ENCODE measurements at regions of chr14 and their contacts with region 1.

Region 1: GRCh38 chr14:67619446-67620216 is at the start of gene ARG2:
- DNase-seq: peak; percentile 98 to 99 (median 98)
- ATAC-seq: peak; percentile 99
- H3K4me3 ChIP-seq: peak within 1 kb of the TSS; percentile 34
- H3K27ac ChIP-seq: no peak within 1 kb of the TSS
- H3K4me1 ChIP-seq: no peaks in the 10 kb centered on the region
- H3K27me3 ChIP-seq: no peaks in the 10 kb centered on the region
- total RNA-seq, gene ARG2: 0.25 to 0.68 (median 0.51) TPM

Region 2: DNA sequence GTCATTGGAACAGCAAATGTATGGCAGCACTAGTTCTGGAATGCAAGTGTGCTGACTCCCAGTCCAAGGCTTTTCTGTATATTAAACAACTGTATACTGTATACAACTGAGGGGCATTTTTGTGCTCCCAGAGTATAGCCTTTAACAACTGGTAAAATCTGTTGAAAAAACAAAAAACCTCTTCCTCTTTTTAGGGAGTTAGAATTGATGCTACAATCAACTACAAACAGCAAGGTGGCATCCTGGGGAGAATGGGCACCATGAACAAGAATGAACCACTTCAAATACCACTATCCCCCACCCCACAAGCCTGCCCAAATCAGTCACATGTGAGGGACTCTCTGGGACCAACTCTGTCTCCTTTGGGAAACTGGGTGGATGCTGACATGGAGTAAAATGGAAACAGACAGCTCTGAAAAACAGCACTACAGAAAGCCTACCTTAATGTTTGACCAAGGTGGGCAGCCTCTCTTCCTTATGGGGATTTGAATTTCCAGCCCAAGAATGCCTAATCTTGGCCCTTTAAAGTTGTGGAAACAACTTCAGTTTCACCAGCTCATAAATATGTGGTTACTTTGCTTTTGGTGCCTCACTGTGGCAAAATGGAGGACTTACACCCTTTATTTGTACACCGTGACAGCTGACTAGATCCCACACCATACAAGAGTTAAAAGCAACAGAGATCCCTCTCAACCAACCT is 47.3 kb after region 1 on chr14:
- intact Hi-C with region 1: loop called in 2 of 4 experiments (anchors 2 to 5 kb)
- DNase-seq: no peak
- ATAC-seq: peak; percentile 69 to 74
- H3K4me3 ChIP-seq: no peak overlapping the region
- H3K27ac ChIP-seq: no peak overlapping the region
- H3K4me1 ChIP-seq: no peaks in the 10 kb centered on the region
- H3K27me3 ChIP-seq: no peaks in the 10 kb centered on the region

Region 3: DNA sequence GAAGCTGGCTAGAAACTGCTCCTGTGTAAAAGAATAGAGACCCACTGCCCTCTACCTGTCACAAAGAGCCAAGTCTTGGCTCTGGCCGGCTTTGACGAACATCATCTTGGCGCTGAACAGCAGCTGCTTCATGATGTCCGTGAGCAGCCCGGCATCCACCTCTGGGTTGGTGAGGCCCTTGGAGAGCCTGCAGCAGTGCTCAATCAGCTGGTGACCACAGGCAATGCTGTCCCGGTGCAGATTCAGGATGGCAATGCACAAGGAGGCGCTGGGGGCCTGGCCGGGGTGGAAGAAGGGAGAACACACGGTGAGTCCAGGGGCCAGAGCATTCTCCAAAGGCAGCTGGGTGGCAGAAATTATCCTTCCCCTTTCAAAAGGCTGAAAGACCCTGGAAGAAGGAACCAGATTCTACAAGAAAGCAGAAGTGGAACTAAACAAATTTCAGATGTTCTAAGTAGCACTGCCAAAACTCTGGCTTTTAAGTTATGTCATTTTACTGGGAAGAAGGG is 146.6 kb after region 1 on chr14:
- intact Hi-C with region 1: no loop called
- DNase-seq: peak in 2 of 3 donors; percentile 42 to 62
- ATAC-seq: peak; percentile 23 to 42
- H3K4me3 ChIP-seq: no peak overlapping the region
- H3K27ac ChIP-seq: no peak overlapping the region
- H3K4me1 ChIP-seq: no peaks in the 10 kb centered on the region
- H3K27me3 ChIP-seq: no peaks in the 10 kb centered on the region

Measured in right cardiac atrium (tissue), 5 donors.